ENCODE measurements at regions of chrX and their contacts with region 1.

Region 1: DNA sequence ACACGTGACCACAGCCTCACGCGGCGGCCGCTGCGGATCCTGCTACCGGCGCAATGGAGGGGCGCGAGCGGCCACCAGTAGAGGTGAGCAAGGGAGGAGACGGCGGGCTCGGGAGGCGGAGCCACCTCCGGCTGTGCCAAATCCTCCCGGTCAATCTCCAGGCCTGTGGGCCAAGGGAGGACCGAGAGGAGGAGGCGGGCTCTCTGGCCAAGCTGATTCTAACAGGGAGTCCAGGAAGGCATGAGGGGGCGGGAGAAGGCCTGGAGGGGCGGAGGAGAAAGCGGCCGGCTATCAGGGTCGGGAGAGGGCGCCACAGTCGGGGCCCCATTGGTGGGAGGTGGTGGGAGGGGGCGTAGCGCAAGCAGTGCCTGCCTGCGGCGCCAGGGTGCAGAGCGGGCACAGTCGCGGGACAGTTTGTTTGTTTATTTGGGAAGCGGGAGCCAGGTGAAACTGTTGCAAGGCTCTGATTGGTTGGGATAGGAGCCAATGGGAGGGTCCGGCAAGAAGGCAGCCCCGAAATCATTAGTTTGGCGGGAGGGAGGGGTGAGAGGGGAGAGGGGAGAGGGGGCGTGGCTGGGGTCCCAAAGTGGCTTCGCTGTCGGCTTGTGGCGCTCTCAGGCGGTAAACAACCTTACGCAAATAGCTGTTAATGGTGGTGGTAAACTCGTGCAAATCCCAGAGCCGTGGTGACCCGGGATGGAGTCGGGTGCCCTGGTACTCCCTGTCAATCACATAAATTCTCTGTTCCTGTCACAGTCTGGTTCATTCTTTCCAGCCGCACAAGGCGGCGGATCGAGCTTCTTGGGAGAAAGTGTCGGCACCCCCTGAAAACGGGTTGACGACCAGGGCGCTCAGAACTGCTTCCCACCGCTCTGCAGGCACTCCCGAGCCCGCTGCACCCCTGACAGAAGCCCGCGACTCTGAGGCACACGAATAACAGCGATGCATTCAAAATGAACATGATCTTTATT is at the start of gene IRS4:
- DNase-seq: peak; percentile 5
- ATAC-seq: no peak
- H3K4me3 Mint-ChIP-seq: no peak within 1 kb of the TSS
- H3K27ac Mint-ChIP-seq: no peak within 1 kb of the TSS
- H3K4me1 Mint-ChIP-seq: no peaks in the 10 kb centered on the region
- H3K27me3 Mint-ChIP-seq: peaks cover 24% of the 10 kb centered on the region
- total RNA-seq, gene IRS4: not detected

Region 2: DNA sequence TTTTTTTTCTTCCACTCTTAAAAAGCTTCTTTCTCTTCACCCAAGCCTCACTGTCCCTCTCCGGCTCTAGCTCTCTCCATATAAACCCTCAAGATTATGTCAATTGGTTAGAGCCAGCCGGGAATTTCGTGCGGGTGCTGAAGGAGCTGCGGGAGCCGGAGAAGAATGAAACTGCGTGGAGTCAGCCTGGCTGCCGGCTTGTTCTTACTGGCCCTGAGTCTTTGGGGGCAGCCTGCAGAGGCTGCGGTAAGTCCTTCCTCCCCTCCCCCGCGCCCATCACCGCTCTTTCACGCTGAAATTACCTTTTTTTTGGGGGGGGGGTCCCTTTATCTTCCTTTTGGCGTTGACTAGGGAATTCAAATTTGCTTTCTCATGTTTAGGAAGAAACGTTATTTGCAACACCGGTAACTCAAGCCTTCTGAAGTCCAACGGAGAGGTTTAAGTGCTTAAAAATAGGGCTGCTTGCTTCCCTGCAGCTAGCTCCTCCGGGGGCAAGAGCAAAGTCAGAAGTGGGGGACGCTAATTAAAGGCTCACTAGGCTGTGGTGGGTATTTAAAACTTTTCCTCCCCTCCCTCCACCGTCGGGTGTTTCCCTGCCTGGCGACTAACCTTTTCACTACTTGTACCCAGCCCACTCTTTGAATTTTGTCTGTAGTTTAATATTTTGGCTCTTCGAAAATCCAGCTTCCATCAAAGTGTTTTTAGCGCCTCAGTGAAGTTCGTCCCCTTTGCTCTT is 296.7 kb before region 1 on chrX:
- CTCF ChIA-PET with region 1: no interaction called
- POLR2A ChIA-PET with region 1: no interaction called
- intact Hi-C with region 1: loop called in 1 of 2 experiments (anchors 10 kb)
- DNase-seq: no peak
- ATAC-seq: no peak
- H3K4me3 Mint-ChIP-seq: peak overlapping the region; percentile 32
- H3K27ac Mint-ChIP-seq: no peak overlapping the region
- H3K4me1 Mint-ChIP-seq: peaks cover 7% of the 10 kb centered on the region
- H3K27me3 Mint-ChIP-seq: peaks cover 23% of the 10 kb centered on the region

Measured in activated CD4-positive, alpha-beta T cell treated with anti-CD3 and anti-CD28 coated beads for 36 hours (primary cell).